Calu3 (cell line): ENCODE measurements at regions of chr6 and their contacts with region 1.

Region 1: DNA sequence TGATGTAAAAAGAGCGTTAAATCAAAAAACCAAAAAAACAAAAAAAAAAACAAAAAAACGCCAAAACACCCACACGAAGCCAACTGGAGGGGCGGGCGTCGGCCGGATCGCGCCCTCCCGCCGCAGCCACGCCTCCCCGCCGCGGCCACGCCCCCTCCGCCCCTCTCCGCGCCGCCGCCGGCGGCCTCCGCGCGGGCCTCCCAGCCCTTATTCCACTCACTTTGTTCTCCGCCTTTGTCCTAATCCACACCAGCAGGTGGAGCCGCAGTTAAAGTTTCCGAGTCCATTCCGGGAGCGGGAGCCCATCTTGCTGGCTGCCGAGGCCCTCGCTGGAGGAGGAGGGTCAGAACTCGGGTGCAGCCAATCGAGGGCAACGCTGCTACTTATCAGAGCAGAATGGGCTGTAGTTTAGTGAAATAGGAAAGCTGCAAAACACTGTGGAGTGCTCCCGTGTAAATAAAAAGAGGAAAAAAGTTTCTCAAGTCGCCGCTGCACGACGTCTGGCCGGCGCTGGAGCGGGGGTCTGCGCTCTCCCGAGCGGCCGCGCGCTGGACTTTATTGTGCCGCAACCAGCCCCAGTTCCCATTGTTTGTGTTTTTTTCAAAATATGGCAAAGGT is at the start of gene ASF1A:
- DNase-seq: peak; percentile 96
- H3K4me3 Mint-ChIP-seq: peak within 1 kb of the TSS; percentile 99
- H3K27ac Mint-ChIP-seq: peak within 1 kb of the TSS; percentile 100
- H3K4me1 Mint-ChIP-seq: peaks cover 17% of the 10 kb centered on the region
- H3K27me3 Mint-ChIP-seq: no peaks in the 10 kb centered on the region
- CTCF ChIP-seq: peak; percentile 46
- total RNA-seq, gene ASF1A: 17.2 and 19.7 TPM in 2 replicates

Region 2: GRCh38 chr6:118934461-118935330 is 40.8 kb after region 1 on chr6 and contains the start of gene MCM9:
- CTCF ChIA-PET with region 1: no interaction called
- intact Hi-C with region 1: loop called (anchors 5 kb)
- DNase-seq: peak; percentile 91
- H3K4me3 Mint-ChIP-seq: peak within 1 kb of the TSS; percentile 86
- H3K27ac Mint-ChIP-seq: peak within 1 kb of the TSS; percentile 62
- H3K4me1 Mint-ChIP-seq: peaks cover 30% of the 10 kb centered on the region
- H3K27me3 Mint-ChIP-seq: no peaks in the 10 kb centered on the region
- CTCF ChIP-seq: no peak
- total RNA-seq, gene MCM9: 17.3 and 24.6 TPM in 2 replicates